ENCODE measurements at regions of chr7 and their contacts with region 1.

Region 1: GRCh38 chr7:50335795-50336754 is 31.6 kb downstream of the IKZF1 start:
- DNase-seq: peak; percentile 78
- ATAC-seq: peak; percentile 27
- H3K4me3 Mint-ChIP-seq: no peak overlapping the region
- H3K27ac Mint-ChIP-seq: no peak overlapping the region
- H3K4me1 Mint-ChIP-seq: peaks cover 61% of the 10 kb centered on the region
- H3K27me3 Mint-ChIP-seq: no peaks in the 10 kb centered on the region

Region 2: DNA sequence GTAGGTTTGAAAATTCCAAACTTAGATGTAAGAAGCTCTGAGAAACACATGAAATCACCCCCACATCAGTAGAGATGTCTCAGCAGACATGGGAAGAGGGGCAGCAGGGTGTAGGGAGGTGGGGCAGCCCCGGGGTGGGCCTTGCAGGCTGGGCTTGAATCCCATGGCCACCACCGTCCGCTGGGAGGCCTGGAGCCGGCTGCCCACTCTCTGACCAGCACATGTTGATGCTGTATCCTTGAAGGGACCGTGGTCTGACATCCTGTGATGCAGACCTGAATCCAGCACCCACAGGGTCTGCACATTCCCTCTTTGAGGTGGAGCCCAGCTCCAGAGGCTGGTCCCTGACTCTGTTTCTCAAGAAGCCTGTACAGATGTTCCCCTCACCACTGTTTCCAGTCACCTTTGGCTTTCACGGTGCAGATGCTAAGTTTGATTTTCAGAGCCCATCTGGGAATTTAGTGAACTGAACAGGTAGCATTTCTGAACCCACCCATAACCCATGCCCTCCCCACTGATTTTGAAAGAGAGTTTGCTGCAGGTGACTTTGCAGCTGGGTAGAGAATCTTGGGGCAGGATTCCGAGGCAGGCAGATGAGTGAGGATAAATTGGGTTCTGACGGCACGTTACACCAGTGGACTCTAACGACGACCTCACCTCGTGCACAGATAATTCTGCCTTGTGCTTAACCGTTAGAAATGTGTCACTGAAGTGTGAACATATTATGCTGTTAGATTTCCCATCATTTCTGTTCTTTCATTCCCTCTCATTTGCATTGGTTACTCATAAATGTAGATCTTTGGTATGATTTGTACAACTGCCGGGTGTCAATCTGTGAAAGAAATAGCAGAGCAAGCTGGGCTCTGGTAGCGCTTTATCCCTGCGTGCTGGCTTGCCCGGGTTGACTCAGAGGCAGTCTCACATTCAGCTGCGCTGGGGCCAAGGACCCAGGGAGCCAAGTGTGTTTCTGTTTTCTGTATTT is 14.2 kb after region 1 on chr7:
- POLR2A ChIA-PET with region 1: interaction called, 123 read pairs
- DNase-seq: no peak
- ATAC-seq: peak; percentile 65
- H3K4me3 Mint-ChIP-seq: peak overlapping the region; percentile 82
- H3K27ac Mint-ChIP-seq: peak overlapping the region; percentile 97
- H3K4me1 Mint-ChIP-seq: peaks cover 85% of the 10 kb centered on the region
- H3K27me3 Mint-ChIP-seq: no peaks in the 10 kb centered on the region

Region 3: GRCh38 chr7:50359995-50360925 is 24.2 kb after region 1 on chr7:
- POLR2A ChIA-PET with region 1: interaction called, 323 read pairs
- DNase-seq: peak; percentile 76
- ATAC-seq: peak; percentile 90
- H3K4me3 Mint-ChIP-seq: peak overlapping the region; percentile 80
- H3K27ac Mint-ChIP-seq: peak overlapping the region; percentile 99
- H3K4me1 Mint-ChIP-seq: peaks cover 90% of the 10 kb centered on the region
- H3K27me3 Mint-ChIP-seq: no peaks in the 10 kb centered on the region

Region 4: GRCh38 chr7:50369143-50370026 is 33.3 kb after region 1 on chr7:
- POLR2A ChIA-PET with region 1: interaction called, 323 read pairs
- DNase-seq: no peak
- ATAC-seq: peak; percentile 19
- H3K4me3 Mint-ChIP-seq: peak overlapping the region; percentile 67
- H3K27ac Mint-ChIP-seq: peak overlapping the region; percentile 78
- H3K4me1 Mint-ChIP-seq: peaks cover 82% of the 10 kb centered on the region
- H3K27me3 Mint-ChIP-seq: no peaks in the 10 kb centered on the region

Region 5: DNA sequence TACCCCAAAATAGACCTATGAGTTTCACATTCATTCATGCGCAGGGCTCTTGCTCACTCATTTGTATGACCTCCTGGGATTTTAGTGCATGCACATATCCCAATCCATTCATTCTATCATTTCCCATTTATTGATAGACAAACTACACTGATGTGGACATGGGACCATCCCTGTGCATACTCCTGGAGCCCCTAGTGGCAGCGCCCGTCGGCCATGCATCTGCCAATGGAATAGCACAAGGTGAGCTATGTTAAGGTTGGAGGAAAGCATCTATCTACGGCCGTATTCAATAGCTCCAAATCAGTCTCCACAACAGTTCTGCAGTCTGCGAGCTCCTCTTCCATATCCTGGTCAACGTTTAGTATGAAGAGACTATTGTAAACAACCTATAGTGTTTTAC is 145.8 kb after region 1 on chr7:
- POLR2A ChIA-PET with region 1: no interaction called
- DNase-seq: no peak
- ATAC-seq: no peak
- H3K4me3 Mint-ChIP-seq: no peak overlapping the region
- H3K27ac Mint-ChIP-seq: no peak overlapping the region
- H3K4me1 Mint-ChIP-seq: no peaks in the 10 kb centered on the region
- H3K27me3 Mint-ChIP-seq: peaks cover 24% of the 10 kb centered on the region